ENCODE measurements at regions of chr21 and their contacts with region 1.

Region 1: DNA sequence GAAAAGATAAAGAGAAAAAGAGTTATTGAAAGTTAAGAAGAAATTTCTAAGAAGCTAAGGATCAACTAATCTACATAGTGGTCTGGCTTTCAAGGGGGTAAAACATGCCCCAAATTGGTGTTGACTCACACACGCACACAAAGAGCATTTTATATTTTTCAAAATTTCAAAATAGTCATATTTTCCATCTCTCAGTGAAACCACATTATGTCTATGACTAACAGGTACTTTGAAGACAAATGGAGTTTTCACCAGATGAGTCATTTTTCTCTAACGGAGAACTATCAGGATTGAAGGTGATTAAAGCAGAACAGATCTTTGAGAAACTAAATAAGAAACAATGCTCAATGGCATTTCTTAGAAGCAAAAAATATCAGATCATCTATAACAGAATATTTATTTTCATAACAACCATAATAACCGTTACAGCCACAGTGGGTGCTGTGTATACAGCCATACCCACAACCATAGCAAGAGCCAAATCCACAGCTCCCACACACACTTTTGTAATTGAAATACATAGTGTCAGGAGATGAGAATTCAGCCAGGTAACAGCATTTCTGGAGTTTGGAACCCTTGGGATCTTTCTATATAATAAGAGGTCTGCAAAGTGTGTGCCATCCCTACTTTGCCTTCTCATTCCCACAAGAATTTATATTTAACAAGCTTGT is at the start of gene KRTAP21-3:
- DNase-seq: peak; percentile 22
- ATAC-seq: peak; percentile 92
- H3K4me3 Mint-ChIP-seq: no peak within 1 kb of the TSS
- H3K27ac Mint-ChIP-seq: peak within 1 kb of the TSS; percentile 75
- H3K4me1 Mint-ChIP-seq: peaks cover 22% of the 10 kb centered on the region
- H3K27me3 Mint-ChIP-seq: peaks cover 4% of the 10 kb centered on the region
- total RNA-seq, gene KRTAP21-3: not detected

Region 2: GRCh38 chr21:31725202-31725839 is 1006.9 kb after region 1 on chr21:
- CTCF ChIA-PET with region 1: no interaction called
- POLR2A ChIA-PET with region 1: no interaction called
- intact Hi-C with region 1: loop called in 1 of 2 experiments (anchors 10 kb)
- DNase-seq: peak; percentile 20
- ATAC-seq: peak; percentile 86
- H3K4me3 Mint-ChIP-seq: no peak overlapping the region
- H3K27ac Mint-ChIP-seq: peak overlapping the region; percentile 28
- H3K4me1 Mint-ChIP-seq: peaks cover 56% of the 10 kb centered on the region
- H3K27me3 Mint-ChIP-seq: no peaks in the 10 kb centered on the region